A549 (cell line): ENCODE measurements at regions of chr19 and their contacts with region 1.

Region 1: DNA sequence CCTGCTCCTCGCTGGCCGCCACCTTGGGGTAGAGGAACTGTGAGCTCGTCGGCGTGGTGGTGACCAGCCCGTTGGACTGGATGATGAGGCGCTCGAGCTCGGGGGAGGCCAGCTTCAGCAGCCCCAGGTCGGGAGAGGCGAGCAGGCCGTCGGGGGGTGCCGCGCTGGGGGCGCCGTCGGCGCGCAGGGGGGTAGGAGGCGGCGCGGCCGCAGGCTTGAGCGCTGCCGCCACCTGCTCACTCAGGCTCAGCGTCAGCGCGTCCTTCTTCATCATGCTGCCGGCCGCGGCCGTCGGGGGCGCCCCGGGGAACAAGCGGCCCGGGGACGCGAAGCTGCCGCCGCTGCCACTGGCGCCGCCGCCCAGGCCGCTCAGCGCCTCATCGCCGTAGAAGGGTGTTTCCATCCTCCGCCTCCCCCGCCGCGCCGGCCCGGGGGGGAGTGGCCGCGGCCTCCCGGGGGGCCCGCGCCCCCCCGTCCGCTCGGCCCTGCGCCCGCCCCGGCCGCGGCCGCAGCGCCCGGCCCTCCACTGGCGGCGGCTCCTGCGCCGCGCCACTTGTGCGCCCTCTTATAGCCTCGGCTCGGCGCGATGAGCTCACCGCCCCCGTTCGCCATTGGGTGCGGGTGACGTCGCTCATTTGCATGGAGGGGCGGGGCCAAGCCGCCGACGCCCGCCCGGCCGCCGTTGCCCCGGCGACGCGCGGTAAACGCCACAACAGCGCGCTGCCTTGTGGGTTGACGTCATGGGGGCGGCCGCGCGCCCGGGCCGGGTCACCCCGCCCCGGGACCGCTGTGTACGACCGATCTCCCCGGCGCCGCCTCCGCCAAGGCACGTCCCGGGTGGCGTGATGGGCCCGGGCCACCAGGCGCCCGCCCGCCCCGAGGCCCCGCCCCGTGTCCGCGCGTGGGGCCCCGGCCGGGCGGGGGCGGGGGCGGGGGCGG is at the start of gene JUND:
- DNase-seq: peak; percentile 62 to 98
- ATAC-seq: peak; percentile 64 to 72
- H3K4me3 ChIP-seq: peak within 1 kb of the TSS; percentile 97
- H3K27ac ChIP-seq: peak within 1 kb of the TSS; percentile 96 to 99
- H3K4me1 ChIP-seq: peaks cover 26% of the 10 kb centered on the region
- CTCF ChIP-seq: no peak
- EP300 ChIP-seq: no peak
- POLR2A ChIP-seq: peak; percentile 92
- RAD21 ChIP-seq: no peak
- polyA plus RNA-seq, gene JUND: 52.9 and 68.9 TPM in 2 replicates

Region 2: DNA sequence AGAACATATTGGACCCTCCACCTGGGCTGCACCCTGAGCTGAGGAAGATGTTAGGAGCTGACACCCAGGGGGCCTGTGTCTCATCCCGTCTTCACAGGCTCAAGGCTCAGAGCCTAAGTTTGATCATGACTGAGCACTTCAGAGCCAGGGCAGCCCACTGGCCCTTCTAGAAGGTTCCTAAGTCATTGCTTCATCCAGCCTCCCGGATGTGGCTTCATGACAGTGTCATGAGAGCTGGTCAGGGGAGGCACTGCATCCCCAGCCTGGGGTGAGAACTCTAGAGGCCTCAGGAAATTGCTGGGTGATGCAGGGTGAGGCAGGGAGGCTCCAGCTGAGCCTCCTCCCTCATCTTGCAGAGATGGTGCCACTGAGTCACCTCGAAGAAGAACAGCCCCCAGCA is 153.3 kb before region 1 on chr19:
- CTCF ChIA-PET with region 1: no interaction called
- POLR2A ChIA-PET with region 1: no interaction called
- DNase-seq: no peak
- ATAC-seq: no peak
- H3K4me3 ChIP-seq: no peak overlapping the region
- H3K27ac ChIP-seq: no peak overlapping the region
- H3K4me1 ChIP-seq: no peaks in the 10 kb centered on the region
- CTCF ChIP-seq: no peak
- EP300 ChIP-seq: no peak
- POLR2A ChIP-seq: no peak
- RAD21 ChIP-seq: no peak

Region 3: GRCh38 chr19:18203863-18204393 is 77.4 kb before region 1 on chr19 and contains the start of gene RAB3A:
- CTCF ChIA-PET with region 1: interaction called, 3 read pairs
- POLR2A ChIA-PET with region 1: interaction called, 14 read pairs
- DNase-seq: peak; percentile 92 to 100
- ATAC-seq: peak; percentile 93 to 96
- H3K4me3 ChIP-seq: peak within 1 kb of the TSS; percentile 57
- H3K27ac ChIP-seq: peak within 1 kb of the TSS; percentile 78 to 87
- H3K4me1 ChIP-seq: peaks cover 10% of the 10 kb centered on the region; the same call in 2 of the 3 replicates
- CTCF ChIP-seq: no peak
- EP300 ChIP-seq: no peak
- POLR2A ChIP-seq: no peak
- RAD21 ChIP-seq: no peak
- polyA plus RNA-seq, gene RAB3A: 0.39 and 1.0 TPM in 2 replicates

Region 4: DNA sequence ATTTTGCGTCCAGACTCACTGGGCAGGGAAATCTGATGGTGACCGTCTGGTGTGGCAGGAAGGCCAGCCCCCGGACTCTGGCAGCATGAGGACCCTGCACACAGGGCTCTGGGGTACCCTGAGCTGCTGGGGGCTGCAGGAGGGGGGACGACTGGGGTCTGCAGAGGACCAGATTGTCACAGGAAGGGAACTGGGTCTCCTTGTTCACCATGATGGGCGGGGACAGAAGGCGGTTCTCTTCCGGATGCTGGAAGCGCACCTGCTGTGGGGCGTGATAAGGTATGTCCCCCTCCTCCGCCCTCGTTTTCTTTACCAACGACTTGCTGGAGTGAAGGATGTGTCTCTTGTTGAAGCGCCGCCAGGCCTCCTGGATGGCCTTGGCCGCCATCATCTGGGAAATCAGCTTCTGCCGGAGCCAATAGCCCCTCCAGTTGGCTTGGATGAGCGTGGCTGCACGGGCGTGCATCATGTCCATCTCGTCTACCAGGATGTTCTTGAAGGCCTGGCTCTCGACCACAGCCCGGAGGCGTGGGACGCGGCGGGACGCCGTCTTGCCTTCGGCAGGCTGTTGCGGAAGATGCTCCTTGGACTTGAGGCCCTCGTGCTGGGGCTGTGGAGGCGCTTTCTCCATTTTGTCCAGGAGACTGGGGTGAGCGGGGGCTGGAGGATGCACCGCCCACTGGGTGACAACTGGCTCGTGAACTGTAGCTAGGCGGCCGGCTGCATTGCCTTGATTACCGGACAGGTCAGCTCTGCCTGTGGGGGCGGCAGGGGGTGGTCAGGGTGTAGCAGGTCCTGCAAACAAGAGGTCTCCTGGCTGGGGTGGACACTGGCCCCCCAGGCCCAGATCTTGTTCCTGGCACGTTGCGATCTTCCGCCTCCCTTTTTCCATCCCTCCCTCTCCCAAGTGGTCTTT is 14.3 kb before region 1 on chr19:
- CTCF ChIA-PET with region 1: interaction called, 27 read pairs
- POLR2A ChIA-PET with region 1: interaction called, 3 read pairs
- DNase-seq: no peak
- ATAC-seq: no peak
- H3K4me3 ChIP-seq: no peak overlapping the region
- H3K27ac ChIP-seq: no peak overlapping the region
- H3K4me1 ChIP-seq: no peaks in the 10 kb centered on the region
- CTCF ChIP-seq: no peak
- EP300 ChIP-seq: no peak
- POLR2A ChIP-seq: no peak
- RAD21 ChIP-seq: no peak

Region 5: GRCh38 chr19:18304458-18305310 is 23.3 kb after region 1 on chr19:
- CTCF ChIA-PET with region 1: interaction called, 27 read pairs
- POLR2A ChIA-PET with region 1: interaction called, 123 read pairs
- DNase-seq: peak in 1 of 2 experiments; percentile 79
- ATAC-seq: peak; percentile 77 to 79
- H3K4me3 ChIP-seq: peak overlapping the region; percentile 34
- H3K27ac ChIP-seq: peak overlapping the region; percentile 99 to 100
- H3K4me1 ChIP-seq: peaks cover 53% of the 10 kb centered on the region
- CTCF ChIP-seq: no peak
- EP300 ChIP-seq: no peak
- POLR2A ChIP-seq: no peak; the same call in 1 of the 2 replicates
- RAD21 ChIP-seq: no peak

Region 6: DNA sequence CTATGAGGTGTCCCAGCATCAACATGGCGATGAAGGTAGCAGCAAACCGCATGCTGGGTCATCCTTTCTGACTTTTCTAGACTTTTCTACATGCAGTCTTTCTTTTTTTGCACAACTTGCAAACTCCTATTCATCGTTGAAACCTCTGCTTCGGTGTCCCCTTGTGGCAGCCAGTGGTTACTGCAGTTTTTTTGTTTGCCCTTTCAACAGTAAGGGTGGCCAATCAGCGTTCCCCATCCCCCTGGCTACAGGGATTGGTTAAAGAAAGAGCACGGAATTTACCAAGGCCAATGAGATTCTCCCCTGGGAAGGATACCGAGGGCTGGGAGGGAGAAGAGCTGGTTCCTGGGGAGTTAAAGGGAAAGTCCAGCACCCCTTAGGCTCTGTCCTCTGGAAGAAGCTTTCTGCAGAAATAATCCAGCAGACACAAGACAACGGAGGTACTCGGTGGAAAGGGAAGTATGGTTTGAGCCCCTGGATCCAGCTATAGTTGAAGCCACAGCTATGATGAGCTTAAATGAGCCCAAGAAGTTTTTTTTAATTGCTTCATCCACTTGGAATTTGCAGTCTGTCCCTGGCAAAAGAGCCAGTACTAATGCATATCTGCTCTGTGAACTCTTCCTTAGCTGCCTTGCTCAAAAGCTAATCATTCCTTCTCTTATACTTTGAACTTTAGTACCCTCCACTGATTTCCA is 47.1 kb after region 1 on chr19:
- CTCF ChIA-PET with region 1: interaction called, 158 read pairs
- POLR2A ChIA-PET with region 1: interaction called, 121 read pairs
- DNase-seq: peak; percentile 94 to 99
- ATAC-seq: peak; percentile 99
- H3K4me3 ChIP-seq: peak overlapping the region; percentile 30
- H3K27ac ChIP-seq: peak overlapping the region; percentile 67 to 83
- H3K4me1 ChIP-seq: peaks cover 27% of the 10 kb centered on the region
- CTCF ChIP-seq: peak; percentile 67
- EP300 ChIP-seq: no peak
- POLR2A ChIP-seq: peak; percentile 32; the same call in 1 of the 2 replicates
- RAD21 ChIP-seq: peak; percentile 73

Region 7: DNA sequence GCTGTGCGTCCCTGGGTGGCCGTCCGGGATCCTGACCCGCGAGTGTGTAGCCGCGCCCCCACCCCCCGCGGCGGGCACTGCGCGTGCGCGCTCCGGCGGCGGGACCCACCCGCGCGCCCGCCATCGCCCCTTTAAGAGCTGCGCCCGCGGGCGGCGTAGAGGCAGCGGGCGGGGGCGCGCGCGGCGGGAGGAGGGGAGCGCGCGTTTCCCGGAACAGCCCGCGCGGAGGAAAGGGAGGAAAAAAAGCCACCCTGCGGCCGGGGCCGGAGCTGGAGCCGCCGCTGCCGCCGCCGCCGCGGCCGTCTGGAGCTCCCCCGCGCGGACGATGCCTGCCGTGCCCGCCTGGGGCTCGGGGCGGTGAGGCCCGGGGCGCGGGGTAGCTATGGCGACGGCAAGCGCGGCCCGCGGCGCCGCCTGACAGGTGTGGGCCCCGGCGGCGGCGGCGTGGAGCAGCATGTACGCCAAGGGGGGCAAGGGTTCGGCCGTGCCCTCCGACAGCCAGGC is 137.9 kb after region 1 on chr19 and contains the start of gene SSBP4:
- CTCF ChIA-PET with region 1: interaction called, 15 read pairs
- POLR2A ChIA-PET with region 1: interaction called, 17 read pairs
- DNase-seq: peak in 1 of 2 experiments; percentile 79
- ATAC-seq: peak in 1 of 2 experiments; percentile 25; a peak in 2 of 6 replicates
- H3K4me3 ChIP-seq: peak within 1 kb of the TSS; percentile 77
- H3K27ac ChIP-seq: peak within 1 kb of the TSS; percentile 96 to 100
- H3K4me1 ChIP-seq: peaks cover 52% of the 10 kb centered on the region
- CTCF ChIP-seq: peak; percentile 32; the same call in 2 of the 3 replicates
- EP300 ChIP-seq: no peak
- POLR2A ChIP-seq: no peak
- RAD21 ChIP-seq: no peak
- polyA plus RNA-seq, gene SSBP4: 5.4 and 6.9 TPM in 2 replicates